ENCODE measurements at regions of chrX and their contacts with region 1.

Region 1: DNA sequence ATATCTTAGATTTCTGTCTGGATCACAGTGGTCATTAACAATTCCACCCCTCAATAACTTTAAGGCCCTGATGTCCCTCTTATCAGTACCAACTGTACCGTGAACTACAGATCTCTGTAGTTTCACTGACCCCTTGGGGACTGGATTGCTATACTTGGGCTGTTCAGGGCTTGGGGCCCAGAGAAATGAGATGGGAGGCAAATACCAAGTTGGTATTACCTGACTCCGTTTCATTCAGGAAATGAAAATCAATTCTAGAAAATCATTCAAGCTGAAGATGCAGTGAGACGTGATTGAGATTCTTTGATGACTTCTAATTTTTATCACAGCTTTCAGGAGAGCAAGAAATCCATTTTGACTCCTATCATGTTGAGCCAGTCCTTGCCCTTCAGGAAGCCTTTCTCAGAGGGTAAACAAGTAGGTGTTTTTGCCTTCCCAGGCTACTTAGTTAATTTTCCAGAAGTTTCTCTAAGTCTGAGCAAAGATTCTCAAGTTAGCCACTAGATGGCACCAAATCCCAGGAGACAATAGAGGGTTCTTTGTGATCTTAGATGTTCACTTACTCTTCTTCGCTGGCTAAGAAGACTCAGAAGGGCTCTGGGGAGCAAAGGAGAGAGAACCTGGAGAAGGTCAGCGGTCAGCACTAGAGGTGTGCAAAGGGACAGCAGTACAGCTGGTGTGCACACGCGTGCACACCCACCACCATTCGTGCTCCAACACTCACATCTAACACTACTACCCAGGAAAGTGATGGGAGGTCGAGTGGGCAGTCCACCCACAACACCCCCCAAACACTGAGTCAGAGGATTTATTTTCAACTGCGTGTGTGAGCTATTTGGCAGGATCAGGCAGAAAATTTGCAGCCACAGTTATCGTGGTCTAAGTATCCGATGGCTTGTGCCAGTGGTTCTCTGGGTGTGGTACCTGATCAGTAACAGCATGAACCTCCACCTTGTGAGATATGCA is 7.4 kb downstream of the HNRNPH2 start:
- DNase-seq: peak; percentile 24
- ATAC-seq: peak; percentile 81
- H3K4me3 Mint-ChIP-seq: peak overlapping the region; percentile 43
- H3K27ac Mint-ChIP-seq: peak overlapping the region; percentile 94
- H3K4me1 Mint-ChIP-seq: peaks cover 63% of the 10 kb centered on the region
- H3K27me3 Mint-ChIP-seq: no peaks in the 10 kb centered on the region

Region 2: DNA sequence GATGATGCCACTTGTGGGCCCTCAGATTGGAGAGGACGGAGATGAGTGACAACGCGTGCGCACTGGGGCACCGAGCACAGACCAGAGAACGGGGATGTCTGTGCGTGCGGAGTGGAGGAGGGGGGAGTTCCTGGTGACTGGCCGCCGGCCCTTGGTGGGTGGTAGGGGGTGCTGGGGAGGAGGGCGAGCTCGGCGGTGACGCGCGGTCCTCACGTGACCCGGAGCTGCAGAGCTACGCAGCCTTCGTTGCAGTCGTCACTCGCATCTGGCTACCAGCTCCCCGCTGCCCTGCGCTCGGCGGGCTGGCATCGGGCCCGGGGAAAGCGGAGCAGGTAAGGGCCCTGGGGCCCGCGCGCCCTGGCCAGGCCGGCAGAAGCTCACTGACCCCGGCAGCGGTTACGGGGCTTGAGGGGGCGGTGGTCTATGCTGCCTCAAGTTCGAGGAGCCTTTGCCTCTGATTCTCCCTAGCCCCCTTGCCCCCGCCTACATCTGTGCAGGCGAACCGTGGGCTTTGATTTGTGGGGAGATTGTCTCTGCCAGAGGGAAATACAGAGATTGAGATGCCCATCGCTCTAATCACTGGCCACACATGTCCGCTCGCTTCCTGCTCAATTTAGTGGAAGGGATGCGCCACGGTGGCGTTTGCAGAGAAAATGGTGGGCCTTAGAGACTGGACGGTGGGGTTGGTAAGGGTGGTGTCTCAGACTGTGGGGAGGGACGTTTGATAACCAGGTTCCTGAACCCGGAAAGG is 69.9 kb after region 1 on chrX and contains the start of gene ARMCX4:
- CTCF ChIA-PET with region 1: interaction called, 3 read pairs
- POLR2A ChIA-PET with region 1: no interaction called
- intact Hi-C with region 1: loop called in 1 of 2 experiments (anchors 5 kb)
- DNase-seq: peak; percentile 65
- ATAC-seq: peak; percentile 92
- H3K4me3 Mint-ChIP-seq: peak within 1 kb of the TSS; percentile 66
- H3K27ac Mint-ChIP-seq: peak within 1 kb of the TSS; percentile 63
- H3K4me1 Mint-ChIP-seq: peaks cover 7% of the 10 kb centered on the region
- H3K27me3 Mint-ChIP-seq: no peaks in the 10 kb centered on the region
- total RNA-seq, gene ARMCX4: 5.6 to 6.0 TPM

Region 3: DNA sequence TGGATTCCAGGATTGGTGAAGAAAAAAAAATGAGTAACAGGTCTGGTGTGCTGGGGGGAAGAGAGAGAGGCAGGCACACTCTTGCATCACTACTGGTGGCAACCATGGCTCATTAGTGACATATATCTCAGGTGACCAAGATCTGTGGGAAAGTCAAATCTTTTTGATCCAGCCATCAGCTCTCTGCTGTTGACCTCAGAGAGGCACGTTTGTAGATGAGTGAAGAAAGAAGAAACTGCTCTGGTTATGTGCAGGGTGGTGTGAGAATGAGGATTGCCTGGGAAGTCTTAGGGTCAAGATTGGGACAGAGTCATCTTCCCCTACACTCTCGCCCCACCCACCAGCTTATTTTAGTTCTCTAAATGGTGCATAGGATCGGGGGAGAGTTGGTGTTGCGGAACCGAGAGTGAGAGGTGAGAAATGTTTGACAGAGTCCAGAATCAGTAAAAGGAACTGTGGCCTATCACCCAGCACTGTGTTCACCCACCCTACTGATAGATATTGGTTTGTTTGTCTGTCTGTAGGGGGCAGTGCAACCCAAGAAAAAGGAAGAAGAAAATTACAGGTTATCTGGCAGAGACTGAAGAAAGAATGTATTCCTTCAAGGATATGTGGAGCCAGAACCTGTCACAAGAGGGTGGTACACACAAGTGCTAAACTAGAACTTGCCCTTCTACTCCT is 180.4 kb after region 1 on chrX:
- CTCF ChIA-PET with region 1: interaction called, 5 read pairs
- POLR2A ChIA-PET with region 1: no interaction called
- intact Hi-C with region 1: loop called (anchors 5 kb)
- DNase-seq: peak; percentile 26
- ATAC-seq: peak; percentile 76
- H3K4me3 Mint-ChIP-seq: no peak overlapping the region
- H3K27ac Mint-ChIP-seq: no peak overlapping the region
- H3K4me1 Mint-ChIP-seq: no peaks in the 10 kb centered on the region
- H3K27me3 Mint-ChIP-seq: peaks cover 11% of the 10 kb centered on the region

Region 4: GRCh38 chrX:101799387-101799786 is 383.9 kb after region 1 on chrX:
- CTCF ChIA-PET with region 1: interaction called, 3 read pairs
- POLR2A ChIA-PET with region 1: no interaction called
- intact Hi-C with region 1: loop called (anchors 1 kb)
- DNase-seq: peak; percentile 85
- ATAC-seq: peak; percentile 100
- H3K4me3 Mint-ChIP-seq: peak overlapping the region; percentile 63
- H3K27ac Mint-ChIP-seq: no peak overlapping the region
- H3K4me1 Mint-ChIP-seq: peaks cover 7% of the 10 kb centered on the region
- H3K27me3 Mint-ChIP-seq: no peaks in the 10 kb centered on the region

Region 5: DNA sequence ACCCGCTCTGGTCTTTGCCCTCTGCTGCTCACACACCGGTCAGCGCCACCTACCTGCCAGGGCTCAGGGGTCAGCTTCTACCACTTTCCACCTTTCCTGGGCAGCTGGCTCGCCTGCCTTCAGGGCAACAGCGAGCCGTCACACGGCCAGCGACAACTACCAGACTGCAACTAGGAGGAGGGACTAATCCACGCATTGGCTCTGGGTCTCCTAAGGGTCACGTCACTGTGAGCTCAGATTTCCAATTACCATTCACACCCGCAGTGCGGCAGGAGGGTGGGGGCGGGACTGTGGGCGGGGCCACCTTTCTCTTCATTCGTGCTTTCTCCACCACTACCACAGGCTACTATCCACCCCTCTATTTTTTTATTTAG is 740.3 kb after region 1 on chrX and contains the start of gene BEX5:
- CTCF ChIA-PET with region 1: no interaction called
- POLR2A ChIA-PET with region 1: no interaction called
- intact Hi-C with region 1: loop called in 1 of 2 experiments (anchors 5 kb)
- DNase-seq: peak; percentile 75
- ATAC-seq: peak; percentile 97
- H3K4me3 Mint-ChIP-seq: peak within 1 kb of the TSS; percentile 85
- H3K27ac Mint-ChIP-seq: peak within 1 kb of the TSS; percentile 90
- H3K4me1 Mint-ChIP-seq: peaks cover 11% of the 10 kb centered on the region
- H3K27me3 Mint-ChIP-seq: peaks cover 5% of the 10 kb centered on the region
- total RNA-seq, gene BEX5: 2.1 to 2.3 TPM

Region 6: GRCh38 chrX:102659790-102660757 is 1244.6 kb after region 1 on chrX:
- CTCF ChIA-PET with region 1: no interaction called
- POLR2A ChIA-PET with region 1: no interaction called
- intact Hi-C with region 1: loop called in 1 of 2 experiments (anchors 10 kb)
- DNase-seq: peak; percentile 91
- ATAC-seq: peak; percentile 99
- H3K4me3 Mint-ChIP-seq: peak overlapping the region; percentile 87
- H3K27ac Mint-ChIP-seq: peak overlapping the region; percentile 92
- H3K4me1 Mint-ChIP-seq: peaks cover 23% of the 10 kb centered on the region
- H3K27me3 Mint-ChIP-seq: no peaks in the 10 kb centered on the region

Measured in activated CD4-positive, alpha-beta T cell treated with anti-CD3 and anti-CD28 coated beads for 36 hours (primary cell).